SK-N-SH (cell line): ENCODE measurements at regions of chr7 and their contacts with region 1.

Region 1: GRCh38 chr7:73451780-73452398 is 18.3 kb downstream of the FZD9 start:
- DNase-seq: peak; percentile 75
- H3K4me3 ChIP-seq: no peak overlapping the region; a peak in 1 of 4 replicates
- H3K27ac ChIP-seq: no peak overlapping the region
- H3K4me1 ChIP-seq: no peaks in the 10 kb centered on the region
- H3K27me3 ChIP-seq: no peaks in the 10 kb centered on the region
- CTCF ChIP-seq: peak; percentile 100
- EP300 ChIP-seq: no peak
- RAD21 ChIP-seq: peak; percentile 99

Region 2: DNA sequence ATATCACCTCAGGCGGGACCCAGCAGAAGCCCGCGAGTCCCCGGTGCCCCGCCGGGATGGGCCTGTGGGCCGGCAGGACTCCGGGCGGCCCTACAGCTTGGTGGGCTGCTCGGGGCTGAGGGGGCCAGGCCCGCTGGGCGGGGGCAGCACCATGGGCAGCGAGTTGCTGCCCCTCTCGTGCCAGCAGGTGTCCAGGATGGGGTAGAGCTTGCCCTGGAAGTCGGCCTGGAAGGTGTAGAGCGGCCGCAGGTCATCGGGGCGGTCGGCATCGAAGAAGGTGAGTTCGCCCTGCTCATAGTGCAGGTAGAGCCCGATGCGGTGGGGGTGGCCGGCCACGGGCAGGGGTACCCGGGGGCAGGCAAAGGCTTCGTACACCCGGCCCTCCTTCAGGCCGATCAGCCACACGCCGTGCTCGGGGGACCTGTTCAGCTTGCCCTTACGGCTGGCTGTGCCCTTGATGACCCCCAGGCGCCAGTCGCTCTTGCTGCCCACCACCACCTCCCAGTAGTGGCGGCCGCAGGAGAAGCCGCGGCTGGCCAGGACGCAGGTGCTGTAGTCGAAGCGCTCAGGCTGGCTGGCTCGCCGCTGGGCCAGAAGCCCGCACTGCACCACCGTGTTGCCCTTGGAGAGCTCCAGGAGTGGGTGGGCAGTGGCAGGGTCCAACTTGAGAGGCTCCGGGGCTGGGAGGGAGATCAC is 138.9 kb before region 1 on chr7:
- CTCF ChIA-PET with region 1: interaction called, 24 read pairs
- POLR2A ChIA-PET with region 1: no interaction called
- DNase-seq: peak; percentile 35
- H3K4me3 ChIP-seq: no peak overlapping the region
- H3K27ac ChIP-seq: no peak overlapping the region
- H3K4me1 ChIP-seq: peaks cover 0 to 5% of the 10 kb centered on the region in 2 experiments; a peak in 1 of 4 replicates
- H3K27me3 ChIP-seq: no peaks in the 10 kb centered on the region
- CTCF ChIP-seq: no peak
- EP300 ChIP-seq: no peak
- RAD21 ChIP-seq: no peak

Region 3: DNA sequence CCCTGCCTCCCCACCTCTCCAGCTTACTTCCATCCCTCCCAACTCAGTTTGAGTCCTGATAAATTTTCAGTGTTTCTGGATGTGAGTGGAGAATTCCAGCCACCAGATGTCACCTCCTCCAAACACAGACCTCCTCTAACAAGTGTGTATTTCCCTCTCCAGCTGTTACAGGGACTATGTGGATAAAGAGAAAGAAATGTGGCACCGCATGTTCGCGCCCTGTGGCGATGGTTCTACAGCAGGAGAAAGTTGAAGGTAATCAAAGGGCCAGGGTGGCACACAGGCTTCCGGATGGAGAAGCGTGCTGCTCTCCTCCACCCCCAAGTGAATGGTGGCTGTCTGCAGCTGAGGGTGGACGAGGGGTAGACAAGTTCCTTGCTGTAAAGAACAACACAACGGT is 109.2 kb before region 1 on chr7:
- CTCF ChIA-PET with region 1: interaction called, 68 read pairs
- POLR2A ChIA-PET with region 1: no interaction called
- DNase-seq: peak; percentile 74
- H3K4me3 ChIP-seq: no peak overlapping the region
- H3K27ac ChIP-seq: no peak overlapping the region
- H3K4me1 ChIP-seq: peaks cover 0 to 2% of the 10 kb centered on the region in 2 experiments; a peak in 1 of 4 replicates
- H3K27me3 ChIP-seq: no peaks in the 10 kb centered on the region; the same call in 1 of the 2 replicates
- CTCF ChIP-seq: peak; percentile 65
- EP300 ChIP-seq: no peak
- RAD21 ChIP-seq: peak; percentile 74

Region 4: GRCh38 chr7:73433924-73434700 is 17.8 kb before region 1 on chr7:
- CTCF ChIA-PET with region 1: interaction called, 67 read pairs
- POLR2A ChIA-PET with region 1: no interaction called
- DNase-seq: no peak
- H3K4me3 ChIP-seq: peak overlapping the region; percentile 45 to 61; a peak in 3 of 4 replicates
- H3K27ac ChIP-seq: no peak overlapping the region
- H3K4me1 ChIP-seq: peaks cover 0 to 26% of the 10 kb centered on the region in 2 experiments; a peak in 2 of 4 replicates
- H3K27me3 ChIP-seq: no peaks in the 10 kb centered on the region
- CTCF ChIP-seq: no peak
- EP300 ChIP-seq: no peak
- RAD21 ChIP-seq: no peak

Region 5: GRCh38 chr7:73477376-73477775 is 25.5 kb after region 1 on chr7:
- CTCF ChIA-PET with region 1: interaction called, 15 read pairs
- POLR2A ChIA-PET with region 1: no interaction called
- DNase-seq: no peak
- H3K4me3 ChIP-seq: no peak overlapping the region
- H3K27ac ChIP-seq: no peak overlapping the region
- H3K4me1 ChIP-seq: no peaks in the 10 kb centered on the region
- H3K27me3 ChIP-seq: no peaks in the 10 kb centered on the region
- CTCF ChIP-seq: no peak
- EP300 ChIP-seq: no peak
- RAD21 ChIP-seq: no peak